Heart left ventricle (tissue), 16 donors: ENCODE measurements at regions of chr1 and their contacts with region 1.

Region 1: GRCh38 chr1:156054500-156055280 is at the start of gene LAMTOR2:
- DNase-seq: peak; percentile 98 to 99 (median 98)
- ATAC-seq: peak; percentile 90 to 96 (median 92)
- H3K4me3 ChIP-seq: peak within 1 kb of the TSS; percentile 64 to 98 (median 87)
- H3K27ac ChIP-seq: peak within 1 kb of the TSS; percentile 83 to 99 (median 96)
- H3K4me1 ChIP-seq: peaks cover 0 to 50% (median 24%) of the 10 kb centered on the region in 12 donors
- H3K27me3 ChIP-seq: no peaks in the 10 kb centered on the region
- CTCF ChIP-seq: peak in 1 of 12 donors; percentile 10
- POLR2A ChIP-seq: peak in 1 of 2 donors; percentile 78
- total RNA-seq, gene LAMTOR2: 51.5 to 83.2 (median 61.4) TPM

Region 2: GRCh38 chr1:155940531-155940992 is 114.1 kb before region 1 on chr1:
- intact Hi-C with region 1: loop called in 4 of 10 experiments (anchors 5 to 10 kb)
- DNase-seq: peak in 3 of 5 donors; percentile 52 to 75 (median 60)
- ATAC-seq: peak; percentile 69 to 87 (median 76)
- H3K4me3 ChIP-seq: no peak overlapping the region
- H3K27ac ChIP-seq: peak overlapping the region; percentile 67 to 92 (median 82)
- H3K4me1 ChIP-seq: peaks cover 4 to 71% (median 47%) of the 10 kb centered on the region in 12 donors
- H3K27me3 ChIP-seq: no peaks in the 10 kb centered on the region
- CTCF ChIP-seq: no peak
- POLR2A ChIP-seq: no peak

Region 3: DNA sequence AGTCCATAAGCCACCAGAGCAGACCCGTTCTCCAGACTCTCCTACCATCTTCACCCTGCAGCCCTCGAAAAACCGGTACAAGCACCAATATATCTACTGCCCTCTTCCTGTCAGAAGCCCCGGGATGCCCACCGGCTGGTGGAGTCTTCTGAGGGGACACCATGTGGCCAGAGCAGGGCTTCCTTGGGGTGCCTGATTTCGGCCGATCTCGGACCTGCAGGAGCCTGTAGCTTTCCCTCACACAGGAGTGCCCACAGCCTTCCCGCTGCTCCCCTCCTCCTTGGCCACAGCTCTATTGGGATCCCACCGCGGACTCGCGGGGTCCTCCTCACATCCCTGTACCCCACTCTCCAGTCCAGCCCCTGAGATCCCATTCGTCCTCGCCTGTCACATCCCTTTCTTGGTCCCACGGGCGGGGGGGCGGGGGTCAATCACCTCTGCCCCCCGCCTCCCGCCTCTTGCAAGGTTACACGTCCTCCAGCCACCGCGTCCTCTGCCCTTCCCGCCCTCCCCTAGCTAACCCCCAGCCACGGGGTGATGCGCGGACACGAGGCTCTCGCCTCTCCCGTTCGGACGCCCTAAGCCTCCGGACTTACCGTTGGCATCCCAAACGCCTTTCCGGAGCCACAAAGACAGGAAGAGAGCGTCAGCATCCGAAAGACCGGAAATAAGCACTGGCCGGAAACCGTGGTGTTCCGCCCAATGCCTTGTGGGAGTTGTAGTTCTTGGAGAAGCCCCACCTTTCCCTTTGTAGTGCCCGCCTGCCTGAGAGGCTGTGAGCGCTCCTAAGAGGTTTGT is 34.2 kb before region 1 on chr1 and contains the start of gene SSR2:
- intact Hi-C with region 1: loop called in 3 of 10 experiments (anchors 2 to 5 kb)
- DNase-seq: peak; percentile 88 to 92 (median 91)
- ATAC-seq: peak; percentile 97 to 99 (median 98)
- H3K4me3 ChIP-seq: peak within 1 kb of the TSS; percentile 59 to 94 (median 81)
- H3K27ac ChIP-seq: peak within 1 kb of the TSS; percentile 45 to 96 (median 90)
- H3K4me1 ChIP-seq: peaks cover 0 to 23% (median 11%) of the 10 kb centered on the region in 12 donors
- H3K27me3 ChIP-seq: no peaks in the 10 kb centered on the region
- CTCF ChIP-seq: no peak
- POLR2A ChIP-seq: peak in 1 of 2 donors; percentile 61
- total RNA-seq, gene SSR2: 67.7 to 174 (median 81.2) TPM

Region 4: GRCh38 chr1:156096640-156097391 is 42.1 kb after region 1 on chr1:
- intact Hi-C with region 1: no loop called
- DNase-seq: peak; percentile 91 to 95 (median 91)
- ATAC-seq: peak; percentile 91 to 96 (median 95)
- H3K4me3 ChIP-seq: peak overlapping the region in 3 of 12 donors; percentile 16 to 27 (median 27)
- H3K27ac ChIP-seq: peak overlapping the region; percentile 51 to 92 (median 86)
- H3K4me1 ChIP-seq: peaks cover 0 to 46% (median 28%) of the 10 kb centered on the region in 12 donors
- H3K27me3 ChIP-seq: no peaks in the 10 kb centered on the region
- CTCF ChIP-seq: peak; percentile 89 to 99 (median 97)
- POLR2A ChIP-seq: no peak